ENCODE measurements at regions of chr7 and their contacts with region 1.

Region 1: GRCh38 chr7:129218514-129219062 is 6.2 kb upstream of the AHCYL2 start:
- DNase-seq: peak; percentile 62
- H3K4me3 Mint-ChIP-seq: no peak overlapping the region
- H3K27ac Mint-ChIP-seq: no peak overlapping the region
- H3K4me1 Mint-ChIP-seq: peaks cover 6% of the 10 kb centered on the region
- H3K27me3 Mint-ChIP-seq: peaks cover 3% of the 10 kb centered on the region

Region 2: DNA sequence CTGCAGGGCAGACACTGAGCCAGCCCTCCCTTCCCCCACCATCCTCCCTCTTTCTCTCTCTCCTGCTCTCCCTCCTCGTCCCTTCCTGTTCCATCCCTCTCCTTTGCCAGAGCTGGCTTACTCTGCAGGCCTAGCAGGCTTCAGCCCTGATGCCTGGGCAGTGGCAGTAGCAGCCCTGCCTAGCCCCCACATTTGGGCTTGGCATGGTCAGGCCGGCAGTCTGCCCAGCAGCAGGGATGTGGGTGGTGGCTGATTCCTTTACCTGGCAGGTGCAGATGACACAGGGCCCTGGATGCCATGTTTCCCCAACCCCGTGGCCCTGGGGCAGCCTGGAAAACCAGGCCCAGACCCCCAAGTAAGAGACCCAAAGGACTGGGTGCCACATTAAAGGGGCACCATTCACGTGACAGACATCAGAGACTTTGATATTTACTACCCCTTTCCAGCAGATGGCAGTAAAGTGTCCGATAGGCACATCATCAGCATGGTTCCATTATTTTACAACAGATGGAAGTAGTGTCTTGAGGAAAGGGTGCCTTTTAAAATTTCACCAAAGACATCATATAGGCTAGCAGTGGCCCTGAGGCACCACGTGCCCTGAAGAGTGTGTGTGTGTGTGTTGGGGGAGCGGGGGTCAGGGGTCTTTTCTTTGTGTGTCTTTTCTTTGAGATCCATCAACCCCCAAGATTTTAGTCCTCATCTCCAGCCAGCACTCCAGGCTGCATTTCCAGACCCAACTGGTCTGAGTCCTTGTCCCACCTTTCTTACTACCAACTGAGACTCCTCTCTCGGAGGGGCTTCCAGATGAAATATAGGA is 314.0 kb before region 1 on chr7:
- intact Hi-C with region 1: loop called (anchors 10 kb)
- DNase-seq: no peak
- H3K4me3 Mint-ChIP-seq: no peak overlapping the region
- H3K27ac Mint-ChIP-seq: no peak overlapping the region
- H3K4me1 Mint-ChIP-seq: no peaks in the 10 kb centered on the region
- H3K27me3 Mint-ChIP-seq: peaks cover 24% of the 10 kb centered on the region

Region 3: DNA sequence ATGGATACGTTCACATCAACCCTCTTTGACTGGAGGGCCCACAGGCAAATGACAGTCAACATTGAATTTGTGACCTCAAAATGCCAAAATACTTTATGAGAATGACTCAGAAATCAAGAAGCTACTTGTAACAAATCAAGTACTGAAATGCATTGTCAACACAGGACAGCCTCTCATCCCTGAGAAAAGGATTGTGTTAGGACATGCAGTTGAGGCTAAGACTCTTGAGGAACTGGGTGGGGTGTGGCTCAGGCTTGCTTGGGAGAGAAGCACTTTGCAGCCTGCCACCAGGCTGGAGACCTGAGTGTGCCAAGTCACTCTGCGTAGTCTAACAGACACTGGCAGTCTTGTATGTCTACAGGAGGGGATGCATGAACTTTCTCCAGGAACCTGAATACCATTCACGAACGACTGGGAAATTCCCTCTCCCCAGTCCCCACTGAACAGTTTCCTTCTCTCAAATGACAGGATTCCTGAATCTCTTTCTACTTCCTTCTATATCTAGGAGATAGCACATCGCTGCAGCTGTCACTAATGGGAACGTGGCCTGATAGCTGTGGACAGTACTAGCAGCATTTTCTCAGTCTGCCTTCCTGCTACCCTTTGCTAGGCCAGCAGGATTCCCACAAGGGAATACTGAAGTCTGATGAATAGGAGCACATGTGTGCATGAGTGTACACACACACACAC is 33.5 kb before region 1 on chr7:
- intact Hi-C with region 1: no loop called
- DNase-seq: no peak
- H3K4me3 Mint-ChIP-seq: no peak overlapping the region
- H3K27ac Mint-ChIP-seq: no peak overlapping the region
- H3K4me1 Mint-ChIP-seq: peaks cover 2% of the 10 kb centered on the region
- H3K27me3 Mint-ChIP-seq: peaks cover 42% of the 10 kb centered on the region

Region 4: GRCh38 chr7:129202058-129202777 is 16.4 kb before region 1 on chr7:
- intact Hi-C with region 1: no loop called
- DNase-seq: no peak
- H3K4me3 Mint-ChIP-seq: no peak overlapping the region
- H3K27ac Mint-ChIP-seq: no peak overlapping the region
- H3K4me1 Mint-ChIP-seq: no peaks in the 10 kb centered on the region
- H3K27me3 Mint-ChIP-seq: peaks cover 10% of the 10 kb centered on the region

Region 5: GRCh38 chr7:129271500-129272355 is 53.1 kb after region 1 on chr7:
- intact Hi-C with region 1: loop called (anchors 1 kb)
- DNase-seq: peak; percentile 50
- H3K4me3 Mint-ChIP-seq: peak overlapping the region; percentile 22
- H3K27ac Mint-ChIP-seq: peak overlapping the region; percentile 43
- H3K4me1 Mint-ChIP-seq: peaks cover 10% of the 10 kb centered on the region
- H3K27me3 Mint-ChIP-seq: no peaks in the 10 kb centered on the region

Region 6: DNA sequence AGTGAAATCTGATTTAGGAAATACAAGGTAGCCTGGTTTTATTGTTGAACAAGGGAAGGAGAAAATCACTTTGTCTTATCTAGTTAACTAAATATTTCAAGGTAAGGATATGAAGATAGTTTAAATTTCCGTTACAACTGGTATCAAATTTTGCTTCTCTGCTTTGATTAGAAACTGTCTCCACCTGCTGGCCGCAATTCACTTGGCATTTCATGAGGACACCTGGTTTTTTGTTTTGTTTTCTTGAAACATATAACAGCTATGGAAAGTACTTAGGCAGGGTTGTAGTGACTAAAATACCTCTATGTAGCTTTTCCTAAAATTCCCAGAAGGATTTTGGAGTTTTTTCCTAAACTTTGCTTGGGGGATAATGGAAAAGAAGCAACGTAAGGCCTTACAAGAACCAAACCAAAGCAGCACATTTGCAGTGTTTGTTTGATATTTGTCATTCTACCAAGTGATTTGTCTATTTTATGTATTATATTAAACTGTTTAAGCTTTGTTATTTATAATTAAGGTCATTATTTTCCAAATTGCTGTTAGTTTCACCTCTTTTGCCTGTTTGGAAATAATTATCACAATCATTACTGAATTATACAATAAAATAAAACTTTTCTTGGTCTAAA is 79.8 kb after region 1 on chr7:
- intact Hi-C with region 1: loop called (anchors 1 kb)
- DNase-seq: no peak
- H3K4me3 Mint-ChIP-seq: no peak overlapping the region
- H3K27ac Mint-ChIP-seq: no peak overlapping the region
- H3K4me1 Mint-ChIP-seq: no peaks in the 10 kb centered on the region
- H3K27me3 Mint-ChIP-seq: no peaks in the 10 kb centered on the region